Body of pancreas (tissue), 4 donors: ENCODE measurements at regions of chr6 and their contacts with region 1.

Region 1: DNA sequence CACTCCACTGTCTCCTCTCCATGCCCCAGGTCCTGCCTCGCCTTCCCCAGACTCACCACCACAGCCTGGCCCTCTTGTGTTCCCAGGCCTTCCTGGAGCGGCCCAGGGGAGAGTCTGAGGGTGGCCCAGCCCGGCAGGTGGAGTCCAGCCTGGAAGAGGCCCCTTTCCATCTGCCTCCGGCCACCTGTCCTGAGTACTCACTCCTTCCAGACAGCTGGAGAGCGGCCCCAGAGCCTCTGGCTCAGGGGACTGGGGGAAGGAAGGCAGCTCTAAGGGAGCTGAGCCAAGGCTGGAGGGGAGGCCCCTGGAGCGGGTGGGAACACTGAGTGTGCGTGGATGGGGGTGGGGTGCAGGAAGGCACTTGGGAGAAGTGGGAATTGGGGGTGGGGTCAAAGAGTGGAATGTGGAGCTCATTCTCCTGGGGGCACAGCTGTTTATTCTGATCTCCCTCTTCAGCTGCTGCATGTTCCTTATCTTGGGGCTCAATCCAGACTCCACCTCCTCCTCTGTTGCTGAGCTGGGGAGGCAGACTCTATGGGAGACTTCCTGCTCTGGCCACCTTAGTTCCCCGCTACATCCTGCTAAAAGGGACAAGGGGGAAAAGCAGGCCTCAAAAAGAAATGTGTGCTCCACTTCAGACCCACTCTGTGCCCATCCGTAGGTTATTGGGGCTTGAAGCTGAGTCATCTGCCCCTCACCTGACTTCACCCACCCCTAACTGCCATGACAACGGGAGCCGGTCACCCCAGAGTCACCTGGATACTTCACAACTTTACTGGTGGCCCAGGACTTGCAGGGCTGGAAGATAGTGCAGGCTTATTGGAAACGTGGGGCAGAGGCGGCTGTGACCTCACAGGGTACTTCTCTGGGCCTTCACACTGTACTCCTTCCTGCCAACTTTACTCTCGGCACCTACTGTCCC is 19.5 kb upstream of the TAF8 start:
- DNase-seq: no peak
- ATAC-seq: no peak
- H3K4me3 ChIP-seq: no peak overlapping the region
- H3K27ac ChIP-seq: no peak overlapping the region
- H3K4me1 ChIP-seq: no peaks in the 10 kb centered on the region
- H3K27me3 ChIP-seq: no peaks in the 10 kb centered on the region
- CTCF ChIP-seq: no peak
- POLR2A ChIP-seq: no peak

Region 2: DNA sequence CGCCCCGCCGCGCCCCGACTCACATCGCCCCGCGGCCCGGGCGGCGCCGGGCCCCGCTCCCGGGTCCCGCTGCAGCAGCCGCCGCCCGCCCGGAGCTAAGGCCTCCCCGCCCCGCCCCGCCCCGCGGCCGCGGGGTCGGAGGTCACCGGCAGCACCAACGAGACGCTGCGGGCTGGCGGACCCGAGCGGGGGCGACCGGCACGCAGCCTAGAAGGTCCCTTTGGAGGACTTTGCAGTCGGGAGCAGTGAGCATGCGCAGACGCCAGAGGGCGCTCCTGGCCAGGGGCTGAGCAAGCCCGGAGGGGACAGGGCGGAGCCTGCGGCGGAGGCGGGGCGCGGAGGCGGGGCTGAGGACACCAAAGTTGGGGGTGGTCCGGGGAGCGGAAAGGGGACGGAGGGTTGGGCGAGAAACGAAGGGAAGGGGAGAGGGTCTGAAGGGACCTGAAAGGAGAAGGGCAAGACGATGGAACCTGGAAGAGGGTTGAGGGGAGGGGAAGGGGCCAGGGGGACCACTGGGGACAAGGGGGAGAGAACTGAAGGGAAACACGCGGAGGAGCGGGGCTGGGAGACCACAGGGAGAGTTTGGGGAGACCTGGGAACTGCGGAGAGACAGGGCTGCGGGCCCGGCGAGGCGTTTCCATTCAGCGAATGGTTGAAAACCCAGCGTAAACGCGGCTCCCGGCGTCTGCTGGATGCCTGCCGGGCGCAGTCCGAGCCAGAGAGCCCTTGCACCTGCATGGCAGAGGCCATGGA is 250.9 kb before region 1 on chr6 and contains the start of gene FRS3:
- intact Hi-C with region 1: loop called (anchors 5 kb)
- DNase-seq: peak; percentile 98 to 99 (median 99)
- ATAC-seq: peak; percentile 92
- H3K4me3 ChIP-seq: peak within 1 kb of the TSS; percentile 41 to 46
- H3K27ac ChIP-seq: peak within 1 kb of the TSS; percentile 62 to 88 (median 81)
- H3K4me1 ChIP-seq: peaks cover 46% of the 10 kb centered on the region
- H3K27me3 ChIP-seq: no peaks in the 10 kb centered on the region
- CTCF ChIP-seq: peak; percentile 89 to 99 (median 98)
- POLR2A ChIP-seq: peak in 1 of 3 donors; percentile 42
- total RNA-seq, gene FRS3: 2.6 to 5.3 TPM

Region 3: DNA sequence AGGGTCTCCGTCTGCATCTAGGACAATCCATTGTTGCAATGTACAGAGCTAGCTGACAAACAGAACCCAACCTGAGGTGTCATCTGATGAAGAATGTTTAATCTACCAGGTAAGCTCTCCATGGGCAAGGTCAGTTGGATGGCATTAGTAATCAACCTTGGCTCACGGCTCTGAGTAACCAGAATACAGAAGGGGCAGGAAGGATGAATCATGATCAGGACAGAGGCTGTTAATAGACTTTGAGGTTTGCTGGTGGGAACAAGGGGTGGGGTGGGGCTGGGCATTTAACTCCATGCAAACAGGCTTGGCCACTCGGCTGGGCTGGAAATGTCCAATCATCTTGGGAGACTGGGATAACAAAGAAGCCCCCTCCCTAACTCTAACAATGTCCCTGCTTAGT is 263.9 kb after region 1 on chr6:
- intact Hi-C with region 1: no loop called
- DNase-seq: no peak
- ATAC-seq: no peak
- H3K4me3 ChIP-seq: no peak overlapping the region
- H3K27ac ChIP-seq: no peak overlapping the region
- H3K4me1 ChIP-seq: no peaks in the 10 kb centered on the region
- H3K27me3 ChIP-seq: no peaks in the 10 kb centered on the region
- CTCF ChIP-seq: no peak
- POLR2A ChIP-seq: no peak